ENCODE measurements at regions of chr2 and their contacts with region 1.

Region 1: GRCh38 chr2:74690571-74690970 is 36.5 kb downstream of the SEMA4F start:
- DNase-seq: peak; percentile 88
- ATAC-seq: peak; percentile 81
- H3K4me3 ChIP-seq: no peak overlapping the region
- H3K27ac ChIP-seq: no peak overlapping the region
- H3K4me1 ChIP-seq: peaks cover 41% of the 10 kb centered on the region
- H3K27me3 ChIP-seq: no peaks in the 10 kb centered on the region
- CTCF ChIP-seq: peak; percentile 95

Region 2: DNA sequence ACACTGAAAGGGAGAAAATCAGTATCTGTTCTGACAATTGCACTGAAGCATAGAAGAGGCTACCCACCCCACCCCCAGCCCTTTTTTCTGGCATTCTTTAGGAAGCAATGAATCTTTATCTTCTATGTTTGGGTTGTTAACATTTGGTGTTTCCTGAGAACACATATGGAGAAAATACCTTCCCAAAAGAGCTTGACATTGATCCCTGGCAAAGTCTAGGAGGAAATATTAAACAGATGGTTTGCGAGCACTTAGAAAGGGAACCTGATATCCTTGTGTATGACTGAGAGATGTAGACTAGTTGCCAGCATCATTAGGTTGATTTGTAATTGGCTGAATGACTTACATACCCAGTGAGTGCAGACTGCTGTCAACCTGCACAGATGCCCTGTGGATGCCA is 93.2 kb before region 1 on chr2:
- CTCF ChIA-PET with region 1: no interaction called
- POLR2A ChIA-PET with region 1: no interaction called
- intact Hi-C with region 1: no loop called
- DNase-seq: no peak
- ATAC-seq: peak; percentile 58
- H3K4me3 ChIP-seq: no peak overlapping the region
- H3K27ac ChIP-seq: no peak overlapping the region
- H3K4me1 ChIP-seq: peaks cover 1% of the 10 kb centered on the region
- H3K27me3 ChIP-seq: peaks cover 8% of the 10 kb centered on the region; the same call in 1 of the 2 replicates
- CTCF ChIP-seq: no peak

Region 3: DNA sequence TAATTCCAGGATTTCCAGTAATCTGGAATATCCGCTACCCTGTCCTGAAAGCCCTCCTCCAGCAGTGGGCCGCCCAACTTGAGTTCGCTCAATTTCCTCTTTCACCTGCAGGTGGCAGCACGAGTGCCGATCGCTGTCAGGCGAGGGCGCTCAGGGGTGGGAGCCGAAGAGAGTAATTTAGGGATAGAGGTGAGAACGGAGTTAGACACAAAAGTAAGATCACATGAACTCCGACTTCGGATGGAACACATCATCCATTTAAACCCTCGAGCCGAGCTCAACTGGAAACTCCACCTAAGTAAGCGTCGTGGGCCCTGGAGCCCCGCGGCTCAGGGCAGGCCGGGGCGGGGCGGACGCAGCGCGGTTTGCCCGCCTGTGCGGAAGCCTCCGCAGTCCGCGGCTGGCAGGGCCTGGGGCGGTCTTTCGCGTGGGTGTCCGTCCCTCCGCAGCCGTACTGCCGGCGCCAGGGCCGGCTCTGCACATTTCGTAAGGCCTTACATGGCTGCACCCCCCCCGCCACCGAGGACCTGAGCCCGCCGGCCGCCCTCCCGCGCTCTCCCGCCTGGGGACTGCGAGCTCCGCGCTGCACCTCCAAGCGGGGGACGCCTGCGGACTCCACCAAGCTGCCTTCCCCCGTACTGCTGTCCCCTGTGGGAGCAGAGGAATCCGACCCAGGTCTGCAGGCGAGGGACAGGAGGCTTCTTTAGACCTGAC is 24.7 kb after region 1 on chr2:
- CTCF ChIA-PET with region 1: no interaction called
- POLR2A ChIA-PET with region 1: no interaction called
- intact Hi-C with region 1: loop called (anchors 2 kb)
- DNase-seq: peak; percentile 93
- ATAC-seq: peak; percentile 62
- H3K4me3 ChIP-seq: peak overlapping the region; percentile 76
- H3K27ac ChIP-seq: peak overlapping the region; percentile 53
- H3K4me1 ChIP-seq: peaks cover 71% of the 10 kb centered on the region
- H3K27me3 ChIP-seq: no peaks in the 10 kb centered on the region
- CTCF ChIP-seq: peak; percentile 97

Region 4: DNA sequence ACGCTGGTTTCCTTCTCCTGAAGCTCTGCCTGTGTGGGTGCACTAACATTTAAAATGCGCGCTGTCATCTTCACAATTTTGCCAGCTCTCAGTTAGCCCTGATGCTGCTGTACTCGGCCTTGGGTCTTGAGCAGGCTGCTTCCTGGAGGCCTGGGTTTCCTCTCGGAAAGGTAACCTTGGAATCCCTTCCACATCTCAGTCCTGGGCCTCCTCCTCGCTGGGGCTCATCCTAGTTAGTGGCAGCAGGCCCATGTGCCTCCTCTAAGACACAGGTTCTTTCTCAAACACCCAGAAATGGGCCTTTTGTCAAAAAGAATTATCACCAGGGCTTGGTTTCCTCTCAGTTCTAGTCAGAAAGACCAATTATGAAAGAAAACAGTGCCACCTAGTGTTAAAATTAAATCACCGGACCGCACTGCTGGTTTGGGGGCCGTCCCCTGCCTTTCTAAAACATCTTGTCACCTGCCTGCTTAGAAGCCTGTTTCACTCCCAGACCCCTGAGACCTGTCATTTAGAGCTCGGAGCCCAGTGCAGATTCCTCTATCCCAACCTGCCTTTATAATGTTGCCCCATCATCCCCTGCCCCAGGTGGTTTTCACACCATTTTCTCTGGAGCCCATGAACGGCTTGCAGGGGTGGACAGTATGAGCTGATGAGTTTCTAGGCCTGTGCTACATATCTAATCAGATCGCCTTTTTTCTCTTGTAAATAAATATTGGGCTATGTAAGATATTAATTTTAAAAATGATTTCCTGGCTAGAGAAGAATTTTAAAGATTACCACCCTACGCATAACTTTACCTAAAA is 185.7 kb after region 1 on chr2:
- CTCF ChIA-PET with region 1: interaction called, 6 read pairs
- POLR2A ChIA-PET with region 1: no interaction called
- intact Hi-C with region 1: loop called (anchors 1 kb)
- DNase-seq: peak; percentile 82
- ATAC-seq: peak; percentile 77
- H3K4me3 ChIP-seq: no peak overlapping the region
- H3K27ac ChIP-seq: no peak overlapping the region
- H3K4me1 ChIP-seq: no peaks in the 10 kb centered on the region
- H3K27me3 ChIP-seq: no peaks in the 10 kb centered on the region
- CTCF ChIP-seq: peak; percentile 83

Region 5: DNA sequence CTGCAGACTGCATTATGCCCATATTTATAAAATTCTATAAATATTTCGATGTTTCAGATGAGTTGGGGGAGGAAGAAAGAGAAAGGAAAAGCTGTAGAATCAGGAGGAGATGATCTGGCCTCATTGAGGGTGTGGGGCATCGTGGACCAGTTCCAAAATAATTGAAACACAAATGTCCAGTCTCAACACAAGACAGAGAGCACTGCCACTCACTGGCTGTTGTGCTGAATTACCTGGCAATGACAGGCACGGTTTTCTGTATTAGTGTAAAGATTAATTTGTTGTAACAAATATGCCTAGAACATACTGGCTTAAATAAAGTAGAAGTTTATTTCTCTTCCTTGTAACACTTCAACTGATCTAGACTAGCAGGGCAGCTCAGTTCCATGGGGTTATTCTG is 292.0 kb after region 1 on chr2:
- CTCF ChIA-PET with region 1: no interaction called
- POLR2A ChIA-PET with region 1: no interaction called
- intact Hi-C with region 1: loop called (anchors 1 kb)
- DNase-seq: peak; percentile 53
- ATAC-seq: peak; percentile 71
- H3K4me3 ChIP-seq: no peak overlapping the region
- H3K27ac ChIP-seq: no peak overlapping the region
- H3K4me1 ChIP-seq: no peaks in the 10 kb centered on the region
- H3K27me3 ChIP-seq: no peaks in the 10 kb centered on the region
- CTCF ChIP-seq: peak; percentile 72

Region 6: GRCh38 chr2:75241696-75242095 is 551.1 kb after region 1 on chr2:
- CTCF ChIA-PET with region 1: no interaction called
- POLR2A ChIA-PET with region 1: no interaction called
- intact Hi-C with region 1: loop called (anchors 1 kb)
- DNase-seq: peak; percentile 66
- ATAC-seq: peak; percentile 63
- H3K4me3 ChIP-seq: no peak overlapping the region
- H3K27ac ChIP-seq: no peak overlapping the region
- H3K4me1 ChIP-seq: peaks cover 19% of the 10 kb centered on the region
- H3K27me3 ChIP-seq: no peaks in the 10 kb centered on the region
- CTCF ChIP-seq: peak; percentile 82

Measured in PC-3 (cell line).